ENCODE measurements at regions of chr20 and their contacts with region 1.

Region 1: DNA sequence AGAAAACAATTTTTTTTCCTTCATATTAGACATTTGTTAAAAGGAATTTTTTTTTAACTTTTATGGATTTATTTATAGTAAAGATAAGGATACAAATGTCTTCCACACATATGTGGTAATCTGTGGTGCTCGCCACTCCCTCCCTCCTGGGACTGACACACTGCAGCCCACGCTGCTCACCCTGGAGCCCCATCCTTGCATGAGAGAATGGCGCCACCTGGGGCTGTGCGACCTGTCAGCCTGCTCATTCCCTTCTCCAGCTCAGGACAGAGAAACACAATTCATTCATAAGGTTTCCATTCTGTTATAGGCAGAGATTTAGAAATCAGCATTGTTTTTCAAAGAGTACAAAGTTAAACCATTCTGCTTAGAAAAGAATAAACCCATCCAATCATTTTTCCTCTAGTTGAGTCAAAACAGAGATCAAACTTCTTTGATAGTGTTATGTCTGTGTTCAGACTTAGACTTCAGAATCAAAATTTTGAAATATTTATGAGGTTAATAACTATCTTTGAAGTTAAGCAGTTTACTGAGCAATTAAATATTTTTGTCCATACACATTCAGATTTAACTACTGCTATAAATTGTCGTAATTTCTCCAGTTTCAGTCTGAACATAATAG is 42.8 kb upstream of the DYNLRB1 start:
- DNase-seq: peak; percentile 52
- ATAC-seq: peak; percentile 72
- H3K4me3 ChIP-seq: no peak overlapping the region
- H3K27ac ChIP-seq: no peak overlapping the region
- H3K4me1 ChIP-seq: peaks cover 7% of the 10 kb centered on the region; the same call in 1 of the 2 replicates
- H3K27me3 ChIP-seq: no peaks in the 10 kb centered on the region
- CTCF ChIP-seq: peak; percentile 70

Region 2: DNA sequence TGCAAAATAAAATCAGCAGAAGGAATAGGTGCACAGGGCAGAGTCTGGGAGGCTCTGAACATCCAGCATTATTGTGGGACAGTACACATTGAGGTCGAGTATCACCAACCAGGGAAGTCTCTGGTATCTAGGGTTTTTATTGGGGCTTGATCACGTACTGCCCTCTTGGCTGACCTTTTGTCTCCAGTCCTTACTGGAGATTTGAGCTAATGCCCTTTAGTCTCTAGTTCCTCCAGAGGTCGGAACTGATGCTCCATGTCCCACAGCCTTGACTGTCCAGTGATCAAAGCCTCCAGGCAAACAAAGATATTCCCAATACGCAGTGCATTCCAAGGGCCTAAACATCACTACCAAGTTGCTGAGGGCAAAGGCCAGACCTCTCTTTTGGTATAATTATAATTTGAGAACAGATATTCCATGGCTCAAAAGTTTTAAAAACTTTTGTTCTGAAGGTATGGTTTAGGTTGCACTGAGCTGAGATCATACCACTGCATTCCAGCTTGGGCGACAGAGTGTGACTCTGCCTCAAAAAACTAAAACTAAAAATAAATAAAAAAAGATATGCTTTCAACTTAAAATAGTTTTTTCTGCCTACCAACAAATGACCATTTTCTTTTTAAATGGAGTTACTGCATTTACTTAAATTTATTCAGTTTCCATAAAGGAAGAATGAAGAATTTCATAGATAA is 14.0 kb before region 1 on chr20:
- CTCF ChIA-PET with region 1: interaction called, 10 read pairs
- POLR2A ChIA-PET with region 1: no interaction called
- intact Hi-C with region 1: no loop called
- DNase-seq: no peak
- ATAC-seq: no peak
- H3K4me3 ChIP-seq: no peak overlapping the region
- H3K27ac ChIP-seq: no peak overlapping the region
- H3K4me1 ChIP-seq: no peaks in the 10 kb centered on the region
- H3K27me3 ChIP-seq: no peaks in the 10 kb centered on the region
- CTCF ChIP-seq: no peak

Region 3: GRCh38 chr20:34522969-34523871 is 49.8 kb after region 1 on chr20:
- CTCF ChIA-PET with region 1: interaction called, 3 read pairs
- POLR2A ChIA-PET with region 1: no interaction called
- intact Hi-C with region 1: loop called (anchors 2 kb)
- DNase-seq: peak; percentile 87
- ATAC-seq: peak; percentile 50
- H3K4me3 ChIP-seq: no peak overlapping the region
- H3K27ac ChIP-seq: peak overlapping the region; percentile 43
- H3K4me1 ChIP-seq: peaks cover 44% of the 10 kb centered on the region
- H3K27me3 ChIP-seq: no peaks in the 10 kb centered on the region
- CTCF ChIP-seq: peak; percentile 92